ENCODE measurements at regions of chrX and their contacts with region 1.

Region 1: GRCh38 chrX:139179592-139179991 is 350.9 kb upstream of the F9 start:
- DNase-seq: no peak

Region 2: GRCh38 chrX:139077281-139078250 is 102.0 kb before region 1 on chrX:
- intact Hi-C with region 1: no loop called
- DNase-seq: no peak

Region 3: DNA sequence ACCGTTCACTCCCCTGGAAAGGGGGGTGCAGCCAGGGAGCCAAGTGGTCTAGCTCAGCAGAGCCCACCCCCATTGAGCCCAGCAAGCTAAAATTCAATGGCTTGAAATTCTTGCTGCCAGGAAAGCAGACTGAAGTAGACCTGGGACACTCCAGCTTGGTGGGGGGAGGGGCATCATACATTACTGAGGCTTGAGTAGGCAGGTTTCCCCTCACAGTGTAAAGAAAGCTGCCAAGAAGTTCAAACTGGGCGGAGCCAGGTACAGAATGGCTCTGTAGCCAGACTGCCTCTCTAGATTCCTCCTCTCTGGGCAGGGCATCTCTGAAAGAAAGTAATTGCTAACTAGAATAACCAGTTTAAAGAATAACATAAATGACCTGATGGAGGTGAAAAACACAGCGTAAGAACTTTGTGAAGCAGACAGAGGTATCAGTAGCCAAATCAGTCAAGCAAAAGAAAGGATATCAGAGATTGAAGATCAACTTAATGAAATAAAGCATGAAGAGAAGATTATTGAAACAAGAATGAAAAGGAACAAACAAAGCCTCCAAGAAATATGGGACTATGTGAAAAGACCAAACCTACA is 21.2 kb before region 1 on chrX:
- intact Hi-C with region 1: loop called in 1 of 2 experiments (anchors 1 kb)
- DNase-seq: no peak

Region 4: GRCh38 chrX:139213241-139213709 is 33.7 kb after region 1 on chrX:
- intact Hi-C with region 1: no loop called
- DNase-seq: no peak

Measured in posterior vena cava (tissue), 2 donors.